ENCODE measurements at regions of chr15 and their contacts with region 1.

Region 1: DNA sequence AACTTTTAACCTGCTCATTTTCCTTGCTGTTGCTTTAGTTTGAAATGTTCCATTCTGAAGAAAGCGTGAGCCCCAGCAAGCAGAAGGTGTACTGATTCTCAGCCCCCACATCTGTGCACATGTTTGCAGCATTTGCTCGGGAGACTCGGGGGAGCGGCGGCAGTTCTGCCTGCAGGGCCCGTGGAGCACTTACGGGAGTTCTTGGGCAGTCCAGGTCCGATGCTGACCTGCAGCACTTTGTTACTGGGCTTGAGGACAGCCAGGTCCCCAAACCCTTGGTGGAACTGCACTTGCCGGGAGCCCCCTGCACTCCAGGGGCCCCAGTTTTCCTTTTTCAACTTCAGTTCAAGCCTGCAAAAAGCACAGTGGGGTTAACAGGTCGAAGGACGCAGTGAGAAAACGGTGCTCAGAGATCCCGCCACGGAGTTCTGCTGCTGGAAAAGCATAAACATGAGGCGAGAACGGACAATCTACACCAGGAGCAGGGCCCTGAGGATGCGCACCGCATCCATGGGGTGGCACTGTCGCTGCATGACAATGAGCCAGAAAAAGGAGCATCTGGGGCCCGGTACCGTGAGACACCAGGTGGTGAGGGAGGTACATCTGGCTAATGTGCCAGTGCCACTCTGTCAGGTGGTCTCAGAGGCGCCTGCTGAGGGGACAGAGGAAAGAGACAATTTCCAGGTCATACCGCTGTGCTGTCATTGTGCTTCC is 45.6 kb upstream of the LDHAL6B start:
- DNase-seq: peak; percentile 34
- H3K4me3 ChIP-seq: no peak overlapping the region
- H3K27ac ChIP-seq: no peak overlapping the region
- H3K4me1 ChIP-seq: no peaks in the 10 kb centered on the region
- H3K27me3 ChIP-seq: no peaks in the 10 kb centered on the region
- CTCF ChIP-seq: peak in 1 of 3 experiments; percentile 5
- POLR2A ChIP-seq: no peak

Region 2: GRCh38 chr15:58555162-58556027 is 605.6 kb before region 1 on chr15:
- intact Hi-C with region 1: no loop called
- DNase-seq: no peak
- H3K4me3 ChIP-seq: no peak overlapping the region
- H3K27ac ChIP-seq: no peak overlapping the region
- H3K4me1 ChIP-seq: peaks cover 8% of the 10 kb centered on the region
- H3K27me3 ChIP-seq: no peaks in the 10 kb centered on the region
- CTCF ChIP-seq: no peak
- POLR2A ChIP-seq: no peak

Region 3: DNA sequence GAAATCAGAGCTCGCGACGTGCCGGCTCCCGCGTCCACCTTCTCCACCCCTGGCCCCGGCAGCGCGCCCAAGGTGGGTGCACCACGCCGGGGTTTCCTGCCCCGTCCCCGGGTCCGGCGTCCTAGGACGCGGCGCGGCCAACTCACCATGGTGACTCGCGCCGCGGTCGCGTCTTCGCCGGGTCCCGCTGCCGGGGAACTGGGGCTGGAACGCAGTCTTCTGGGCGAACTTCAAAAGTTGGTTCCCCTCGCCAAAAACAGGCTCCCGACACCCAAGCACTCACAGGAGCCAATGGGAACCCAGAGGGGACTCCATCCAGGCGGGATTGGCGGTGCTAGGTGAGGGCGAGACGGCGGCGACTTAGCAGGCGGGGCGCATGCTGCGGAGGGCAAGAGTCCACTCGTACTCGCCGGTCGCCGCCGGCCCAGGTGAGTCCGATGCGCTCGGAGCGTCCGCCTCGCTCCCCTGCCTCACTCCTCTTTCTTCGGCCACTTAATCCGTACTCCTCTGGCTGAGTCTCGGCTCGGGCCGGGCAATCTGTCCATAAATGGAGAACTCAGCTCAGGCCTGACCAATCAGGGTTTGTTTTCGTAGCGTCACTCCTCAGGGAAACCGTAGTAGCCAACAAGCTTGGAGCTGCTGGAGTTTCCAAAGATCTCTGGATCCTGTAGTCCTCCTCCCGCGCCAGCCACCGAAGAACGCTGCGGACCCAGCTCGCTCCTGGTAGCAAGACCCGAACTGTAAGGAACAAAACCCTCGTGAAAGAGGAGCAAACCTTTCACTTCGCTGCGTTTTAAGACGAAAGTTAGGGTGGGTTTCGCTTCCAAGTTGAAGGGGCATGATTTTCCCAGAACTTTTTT is 211.5 kb after region 1 on chr15 and contains the start of gene MYO1E:
- intact Hi-C with region 1: loop called (anchors 10 kb)
- DNase-seq: peak; percentile 97
- H3K4me3 ChIP-seq: peak within 1 kb of the TSS; percentile 85 to 89
- H3K27ac ChIP-seq: peak within 1 kb of the TSS; percentile 93 to 96
- H3K4me1 ChIP-seq: no peaks in the 10 kb centered on the region
- H3K27me3 ChIP-seq: no peaks in the 10 kb centered on the region
- CTCF ChIP-seq: no peak
- POLR2A ChIP-seq: peak; percentile 52
- total RNA-seq, gene MYO1E: 14.3 to 22.5 TPM

Measured in testis (tissue), 5 donors.